ENCODE measurements at regions of chr3 and their contacts with region 1.

Region 1: DNA sequence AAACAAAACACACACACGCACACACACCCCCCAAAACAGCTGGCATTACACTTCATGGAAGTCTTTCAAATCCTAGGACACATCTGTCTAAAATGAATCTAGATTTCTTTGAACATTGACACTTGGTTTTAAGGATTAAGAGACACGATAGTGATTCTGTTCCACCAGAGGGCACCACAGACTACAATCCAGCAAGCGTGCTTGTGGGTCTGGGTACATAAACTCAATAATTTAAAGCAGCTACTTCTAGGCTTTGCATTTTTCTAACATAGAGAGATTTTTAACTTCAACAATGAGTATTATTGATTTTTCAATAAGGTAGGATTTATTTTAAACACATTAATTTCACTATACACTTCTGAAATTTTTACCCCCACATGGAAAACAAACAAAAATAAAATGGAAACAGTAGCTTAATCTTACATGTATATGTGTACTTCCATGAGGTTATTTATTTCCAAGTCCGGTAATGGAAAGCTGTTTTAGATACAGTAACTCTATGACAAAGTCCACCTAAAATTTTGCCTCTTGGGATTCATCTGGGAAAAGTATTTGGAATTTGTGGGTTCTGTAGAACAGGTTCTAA is 564.0 kb upstream of the TGFBR2 start:
- DNase-seq: peak; percentile 88
- H3K4me3 ChIP-seq: no peak overlapping the region
- H3K27ac ChIP-seq: no peak overlapping the region
- H3K4me1 ChIP-seq: peaks cover 25% of the 10 kb centered on the region
- H3K27me3 ChIP-seq: no peaks in the 10 kb centered on the region
- CTCF ChIP-seq: peak; percentile 56
- POLR2A ChIP-seq: no peak

Region 2: GRCh38 chr3:28916713-28917499 is 1125.5 kb before region 1 on chr3:
- CTCF ChIA-PET with region 1: interaction called, 12 read pairs
- POLR2A ChIA-PET with region 1: no interaction called
- dilution Hi-C with region 1: no loop called
- intact Hi-C with region 1: no loop called
- DNase-seq: peak; percentile 96
- H3K4me3 ChIP-seq: peak overlapping the region; percentile 3 to 73 (median 45)
- H3K27ac ChIP-seq: peak overlapping the region; percentile 57
- H3K4me1 ChIP-seq: peaks cover 9% of the 10 kb centered on the region
- H3K27me3 ChIP-seq: no peaks in the 10 kb centered on the region
- CTCF ChIP-seq: peak; percentile 65 to 71
- POLR2A ChIP-seq: no peak

Region 3: DNA sequence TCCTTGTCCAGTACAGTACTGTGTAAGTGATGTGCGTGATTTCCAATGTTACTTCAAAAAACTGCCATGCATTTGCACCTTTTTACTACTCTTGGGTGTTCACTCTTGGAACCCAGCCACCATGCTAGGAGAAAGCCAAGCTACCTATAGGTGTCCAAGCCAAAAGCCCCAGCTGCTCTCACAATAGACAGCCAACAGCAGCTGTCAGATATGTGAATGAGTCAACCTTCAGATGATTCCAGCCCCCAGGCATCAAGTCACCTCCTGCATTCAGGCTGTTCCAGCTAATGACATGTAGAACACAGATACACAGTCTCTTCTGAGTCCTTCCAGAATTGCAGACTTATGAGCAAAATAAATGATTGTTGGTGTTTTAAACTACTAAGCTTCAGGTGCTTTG is 146.3 kb after region 1 on chr3:
- CTCF ChIA-PET with region 1: interaction called, 12 read pairs
- POLR2A ChIA-PET with region 1: no interaction called
- dilution Hi-C with region 1: no loop called
- intact Hi-C with region 1: no loop called
- DNase-seq: no peak
- H3K4me3 ChIP-seq: no peak overlapping the region
- H3K27ac ChIP-seq: no peak overlapping the region
- H3K4me1 ChIP-seq: peaks cover 3% of the 10 kb centered on the region
- H3K27me3 ChIP-seq: peaks cover 2 to 10% of the 10 kb centered on the region in 2 experiments
- CTCF ChIP-seq: no peak
- POLR2A ChIP-seq: no peak

Region 4: DNA sequence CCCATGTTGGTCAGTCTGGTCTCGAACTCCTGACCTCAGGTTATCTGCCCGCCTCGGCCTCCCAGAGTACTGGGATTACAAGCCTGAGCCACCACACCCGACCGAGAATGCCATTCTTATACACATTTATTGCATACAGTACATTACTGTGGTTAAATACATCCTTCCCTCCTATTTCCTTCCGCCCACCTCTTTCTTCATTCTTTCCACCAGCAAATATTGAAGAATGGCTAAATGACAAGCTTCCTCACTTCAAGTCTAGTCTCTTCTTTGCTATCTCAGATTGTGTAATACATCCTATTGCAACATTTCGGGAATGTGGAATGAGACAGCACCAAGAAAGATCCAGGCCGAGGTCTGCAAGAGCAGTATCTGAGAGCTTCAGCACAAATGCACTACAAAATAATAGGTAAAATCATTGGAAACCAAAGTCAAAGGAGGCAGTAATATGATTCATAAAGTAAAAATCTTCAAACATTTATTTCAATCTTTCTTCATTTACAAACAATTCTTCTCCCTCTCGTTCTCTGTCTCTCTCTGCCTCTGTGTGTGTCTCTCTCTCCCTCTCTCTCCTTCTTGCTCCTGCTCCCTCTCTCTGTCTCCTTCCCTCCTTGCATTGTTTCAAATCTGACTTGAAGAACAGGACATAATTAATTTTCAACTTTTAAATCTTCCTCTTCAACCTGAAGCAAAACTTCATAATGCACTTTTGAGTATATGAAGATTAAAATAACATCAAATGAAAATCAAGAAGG is 469.3 kb after region 1 on chr3:
- CTCF ChIA-PET with region 1: interaction called, 11 read pairs
- POLR2A ChIA-PET with region 1: no interaction called
- dilution Hi-C with region 1: no loop called
- intact Hi-C with region 1: loop called (anchors 5 kb)
- DNase-seq: peak; percentile 64
- H3K4me3 ChIP-seq: no peak overlapping the region
- H3K27ac ChIP-seq: peak overlapping the region; percentile 72
- H3K4me1 ChIP-seq: peaks cover 49% of the 10 kb centered on the region
- H3K27me3 ChIP-seq: no peaks in the 10 kb centered on the region
- CTCF ChIP-seq: no peak
- POLR2A ChIP-seq: no peak

Region 5: DNA sequence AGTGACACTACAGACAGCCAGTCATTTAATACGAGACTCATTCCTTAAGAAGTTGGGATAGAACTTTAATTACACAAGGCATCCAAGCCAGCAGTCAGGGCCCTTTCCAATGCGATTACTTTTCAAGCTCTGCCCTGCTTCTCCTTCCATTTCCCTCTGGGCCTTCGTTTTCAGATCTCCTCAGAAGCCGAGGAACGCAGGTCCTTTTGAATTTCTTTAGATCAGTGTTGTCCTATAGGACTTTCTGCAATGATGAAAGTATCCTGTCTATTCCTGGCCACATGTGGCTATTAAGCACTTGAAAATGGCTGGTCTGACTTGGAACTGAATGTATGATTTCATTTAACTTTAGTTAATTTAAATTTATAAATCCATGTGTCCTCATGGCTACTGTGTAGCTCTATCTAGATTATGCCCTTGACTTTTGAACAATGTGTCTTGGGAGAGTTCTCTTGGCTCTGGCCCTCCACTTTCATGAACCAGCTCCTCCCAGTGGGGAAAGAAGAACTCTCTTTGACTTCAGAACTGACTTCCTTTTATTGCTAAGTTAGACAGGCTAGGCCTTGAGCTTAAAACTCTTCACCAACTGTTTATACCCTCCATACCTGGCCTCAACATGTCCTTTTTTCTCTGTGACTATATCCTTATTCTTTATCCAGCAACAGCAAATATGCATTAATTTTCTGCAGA is 586.7 kb after region 1 on chr3:
- CTCF ChIA-PET with region 1: interaction called, 14 read pairs
- POLR2A ChIA-PET with region 1: no interaction called
- dilution Hi-C with region 1: no loop called
- intact Hi-C with region 1: no loop called
- DNase-seq: no peak
- H3K4me3 ChIP-seq: no peak overlapping the region
- H3K27ac ChIP-seq: peak overlapping the region; percentile 39
- H3K4me1 ChIP-seq: peaks cover 87% of the 10 kb centered on the region
- H3K27me3 ChIP-seq: no peaks in the 10 kb centered on the region
- CTCF ChIP-seq: peak in 1 of 2 donors; percentile 6
- POLR2A ChIP-seq: no peak

Region 6: DNA sequence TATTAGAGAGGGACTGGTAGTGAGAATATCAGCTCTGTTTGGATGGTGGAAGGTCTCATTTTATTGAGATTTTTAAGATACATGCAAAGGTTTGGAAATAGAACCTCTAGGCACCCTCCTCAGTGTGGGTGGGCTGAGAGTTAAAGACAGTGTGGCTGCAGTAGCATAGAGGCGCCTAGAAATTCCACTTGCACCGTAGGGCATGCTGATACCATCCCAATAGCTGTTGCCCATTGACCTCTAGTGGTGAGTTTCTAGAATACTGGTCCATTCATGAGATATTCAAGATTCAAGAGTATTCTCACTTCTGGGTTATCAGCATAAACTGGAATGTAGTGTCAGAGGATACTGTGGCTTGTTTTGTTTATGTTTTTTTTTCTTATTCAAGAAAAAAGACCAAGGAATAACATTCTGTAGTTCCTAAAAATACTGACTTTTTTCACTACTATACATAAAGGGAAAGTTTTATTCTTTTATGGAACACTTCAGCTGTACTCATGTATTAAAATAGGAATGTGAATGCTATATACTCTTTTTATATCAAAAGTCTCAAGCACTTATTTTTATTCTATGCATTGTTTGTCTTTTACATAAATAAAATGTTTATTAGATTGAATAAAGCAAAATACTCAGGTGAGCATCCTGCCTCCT is 651.2 kb after region 1 on chr3:
- CTCF ChIA-PET with region 1: interaction called, 56 read pairs
- POLR2A ChIA-PET with region 1: no interaction called
- dilution Hi-C with region 1: no loop called
- intact Hi-C with region 1: loop called (anchors 1 kb)
- DNase-seq: peak; percentile 85
- H3K4me3 ChIP-seq: no peak overlapping the region
- H3K27ac ChIP-seq: peak overlapping the region; percentile 25
- H3K4me1 ChIP-seq: peaks cover 45% of the 10 kb centered on the region
- H3K27me3 ChIP-seq: no peaks in the 10 kb centered on the region
- CTCF ChIP-seq: peak; percentile 57 to 65
- POLR2A ChIP-seq: peak; percentile 24

Region 7: GRCh38 chr3:30768703-30769685 is 726.6 kb after region 1 on chr3:
- CTCF ChIA-PET with region 1: interaction called, 5 read pairs
- POLR2A ChIA-PET with region 1: no interaction called
- dilution Hi-C with region 1: loop called (anchors 25 kb)
- intact Hi-C with region 1: no loop called
- DNase-seq: peak; percentile 70
- H3K4me3 ChIP-seq: no peak overlapping the region
- H3K27ac ChIP-seq: no peak overlapping the region
- H3K4me1 ChIP-seq: no peaks in the 10 kb centered on the region
- H3K27me3 ChIP-seq: peaks cover 0 to 3% of the 10 kb centered on the region in 2 experiments
- CTCF ChIP-seq: peak; percentile 80 to 85
- POLR2A ChIP-seq: no peak

Region 8: DNA sequence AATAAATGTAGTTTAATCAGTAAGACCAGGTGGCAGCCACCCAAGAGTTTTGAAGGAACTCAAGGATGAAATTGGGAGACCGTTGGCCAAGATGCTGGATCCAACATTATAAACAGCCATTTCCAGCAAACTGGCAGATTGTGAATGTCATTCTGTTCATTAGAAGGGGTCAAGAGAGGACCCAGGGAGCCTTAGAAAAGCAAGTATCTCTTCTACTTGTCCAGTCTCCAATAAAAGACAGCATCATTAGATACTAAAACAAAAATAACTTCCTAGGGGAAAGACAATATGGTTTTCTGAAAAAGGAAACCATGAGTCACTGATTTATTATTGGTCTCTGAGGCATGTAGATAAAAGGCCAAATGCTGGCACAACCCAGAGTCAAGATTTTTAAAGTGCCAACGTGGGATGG is 784.2 kb after region 1 on chr3:
- CTCF ChIA-PET with region 1: no interaction called
- POLR2A ChIA-PET with region 1: no interaction called
- dilution Hi-C with region 1: no loop called
- intact Hi-C with region 1: no loop called
- DNase-seq: peak; percentile 20
- H3K4me3 ChIP-seq: no peak overlapping the region
- H3K27ac ChIP-seq: no peak overlapping the region
- H3K4me1 ChIP-seq: peaks cover 5% of the 10 kb centered on the region
- H3K27me3 ChIP-seq: peaks cover 0 to 11% of the 10 kb centered on the region in 2 experiments
- CTCF ChIP-seq: no peak
- POLR2A ChIP-seq: no peak